Adrenal gland (tissue), 19 donors: ENCODE measurements at regions of chr2 and their contacts with region 1.

Region 1: GRCh38 chr2:119553687-119554344 is 9.6 kb downstream of the CFAP221 start:
- DNase-seq: no peak
- H3K4me3 ChIP-seq: no peak overlapping the region
- H3K27ac ChIP-seq: no peak overlapping the region
- H3K4me1 ChIP-seq: peaks cover 0 to 13% of the 10 kb centered on the region in 2 donors
- H3K27me3 ChIP-seq: no peaks in the 10 kb centered on the region
- CTCF ChIP-seq: no peak
- POLR2A ChIP-seq: no peak

Region 2: GRCh38 chr2:119066272-119066804 is 487.5 kb before region 1 on chr2:
- intact Hi-C with region 1: loop called in 1 of 2 experiments (anchors 10 kb)
- DNase-seq: no peak
- H3K4me3 ChIP-seq: no peak overlapping the region
- H3K27ac ChIP-seq: no peak overlapping the region
- H3K4me1 ChIP-seq: no peaks in the 10 kb centered on the region
- H3K27me3 ChIP-seq: no peaks in the 10 kb centered on the region
- CTCF ChIP-seq: no peak
- POLR2A ChIP-seq: no peak